ENCODE measurements at regions of chr7 and their contacts with region 1.

Region 1: DNA sequence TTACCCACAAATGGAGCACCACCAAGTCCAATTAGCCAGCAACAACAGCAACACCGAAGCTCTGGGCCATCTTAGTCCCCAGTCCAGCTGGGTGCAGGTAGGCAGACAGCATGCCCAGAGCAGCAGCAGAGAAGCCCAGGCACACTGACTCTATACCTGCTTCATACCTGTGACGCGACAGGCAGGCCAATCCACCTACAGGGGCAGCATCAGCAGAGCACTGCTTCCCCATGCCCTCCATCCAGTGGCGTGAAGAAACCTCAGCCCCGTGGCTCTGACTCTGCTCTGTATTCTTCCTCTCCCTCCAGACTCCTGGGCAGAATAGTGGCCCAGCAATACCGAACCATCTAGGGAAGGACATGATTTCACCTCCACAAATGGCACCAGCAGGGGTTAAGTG is 191.7 kb downstream of the AKR1D1 start:
- DNase-seq: no peak
- ATAC-seq: no peak
- H3K4me3 ChIP-seq: no peak overlapping the region
- H3K27ac ChIP-seq: no peak overlapping the region
- H3K4me1 ChIP-seq: no peaks in the 10 kb centered on the region
- H3K27me3 ChIP-seq: no peaks in the 10 kb centered on the region
- CTCF ChIP-seq: no peak

Region 2: DNA sequence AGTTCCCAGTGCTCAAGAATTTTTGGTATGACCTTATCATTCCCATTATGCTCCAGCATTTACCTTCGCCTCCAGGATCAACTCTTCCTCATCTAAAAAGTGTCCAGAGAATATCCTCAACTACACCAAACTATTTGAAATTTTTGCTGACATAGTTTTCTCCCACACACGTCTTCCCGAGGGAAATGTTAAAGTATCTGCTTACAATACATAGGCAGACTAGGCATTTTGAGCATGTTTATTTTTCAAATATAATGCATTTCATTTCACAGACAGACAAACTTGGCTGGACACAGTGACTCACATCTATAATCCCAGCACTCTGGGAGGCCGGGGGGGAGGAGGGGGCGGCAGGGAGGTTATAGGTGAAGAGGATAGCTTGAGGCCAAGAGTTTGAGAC is 15.1 kb after region 1 on chr7:
- CTCF ChIA-PET with region 1: no interaction called
- POLR2A ChIA-PET with region 1: interaction called, 16 read pairs
- intact Hi-C with region 1: no loop called
- DNase-seq: no peak
- ATAC-seq: no peak
- H3K4me3 ChIP-seq: no peak overlapping the region
- H3K27ac ChIP-seq: no peak overlapping the region
- H3K4me1 ChIP-seq: peaks cover 4% of the 10 kb centered on the region; the same call in 1 of the 2 replicates
- H3K27me3 ChIP-seq: no peaks in the 10 kb centered on the region
- CTCF ChIP-seq: no peak

Region 3: GRCh38 chr7:138303943-138304495 is 36.1 kb after region 1 on chr7:
- CTCF ChIA-PET with region 1: no interaction called
- POLR2A ChIA-PET with region 1: no interaction called
- intact Hi-C with region 1: no loop called
- DNase-seq: peak; percentile 84
- ATAC-seq: peak; percentile 24; the same call in 1 of the 2 replicates
- H3K4me3 ChIP-seq: no peak overlapping the region
- H3K27ac ChIP-seq: no peak overlapping the region
- H3K4me1 ChIP-seq: no peaks in the 10 kb centered on the region
- H3K27me3 ChIP-seq: no peaks in the 10 kb centered on the region
- CTCF ChIP-seq: no peak

Region 4: DNA sequence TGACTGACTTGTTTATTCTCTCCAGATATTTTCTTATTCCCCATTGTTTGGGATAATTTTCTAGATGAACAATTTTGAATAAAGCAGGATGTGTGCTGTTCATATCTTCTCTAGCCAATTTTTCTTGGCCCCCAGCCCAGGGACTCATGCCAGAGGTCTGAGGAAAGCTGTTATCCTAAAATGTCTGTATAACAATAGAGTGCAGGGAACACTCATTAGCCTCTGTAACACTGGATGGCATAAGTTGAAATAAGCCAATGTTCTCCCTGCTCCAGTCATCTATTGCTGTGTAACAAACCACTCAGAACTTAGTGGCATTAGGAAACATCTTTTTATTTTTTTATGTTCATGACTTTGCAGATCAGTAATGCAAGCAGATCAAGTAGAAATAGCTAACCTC is 70.4 kb after region 1 on chr7:
- CTCF ChIA-PET with region 1: no interaction called
- POLR2A ChIA-PET with region 1: no interaction called
- intact Hi-C with region 1: no loop called
- DNase-seq: peak; percentile 61
- ATAC-seq: no peak
- H3K4me3 ChIP-seq: no peak overlapping the region
- H3K27ac ChIP-seq: no peak overlapping the region
- H3K4me1 ChIP-seq: no peaks in the 10 kb centered on the region
- H3K27me3 ChIP-seq: no peaks in the 10 kb centered on the region
- CTCF ChIP-seq: no peak